CD8-positive, alpha-beta T cell (primary cell): ENCODE measurements at regions of chrX and their contacts with region 1.

Region 1: GRCh38 chrX:153934473-153935325 is at the start of gene NAA10:
- DNase-seq: peak in 8 of 9 experiments; percentile 23 to 77 (median 54)
- ATAC-seq: peak; percentile 71
- H3K4me3 ChIP-seq: peak within 1 kb of the TSS; percentile 39 to 54
- H3K4me3 Mint-ChIP-seq: peak within 1 kb of the TSS; percentile 89
- H3K27ac ChIP-seq: peak within 1 kb of the TSS in 1 of 2 experiments; percentile 43
- H3K27ac Mint-ChIP-seq: peak within 1 kb of the TSS; percentile 86
- H3K4me1 ChIP-seq: peaks cover 11% of the 10 kb centered on the region
- H3K4me1 Mint-ChIP-seq: peaks cover 22% of the 10 kb centered on the region
- H3K27me3 ChIP-seq: no peaks in the 10 kb centered on the region
- H3K27me3 Mint-ChIP-seq: no peaks in the 10 kb centered on the region
- CTCF ChIP-seq: no peak
- total RNA-seq, gene NAA10: 34.4 to 35.3 TPM

Region 2: GRCh38 chrX:153763989-153764755 is 170.5 kb before region 1 on chrX and contains the start of gene PLXNB3:
- CTCF ChIA-PET with region 1: interaction called, 11 read pairs
- POLR2A ChIA-PET with region 1: no interaction called
- intact Hi-C with region 1: no loop called
- DNase-seq: peak; percentile 45 to 89 (median 70)
- ATAC-seq: peak; percentile 88
- H3K4me3 ChIP-seq: no peak within 1 kb of the TSS
- H3K4me3 Mint-ChIP-seq: no peak within 1 kb of the TSS
- H3K27ac ChIP-seq: no peak within 1 kb of the TSS
- H3K27ac Mint-ChIP-seq: no peak within 1 kb of the TSS
- H3K4me1 ChIP-seq: peaks cover 10% of the 10 kb centered on the region
- H3K4me1 Mint-ChIP-seq: peaks cover 10% of the 10 kb centered on the region
- H3K27me3 ChIP-seq: no peaks in the 10 kb centered on the region
- H3K27me3 Mint-ChIP-seq: no peaks in the 10 kb centered on the region
- CTCF ChIP-seq: peak; percentile 52
- total RNA-seq, gene PLXNB3: 0.35 to 0.50 TPM

Region 3: GRCh38 chrX:153875391-153876111 is 59.1 kb before region 1 on chrX:
- CTCF ChIA-PET with region 1: no interaction called
- POLR2A ChIA-PET with region 1: no interaction called
- intact Hi-C with region 1: no loop called
- DNase-seq: peak; percentile 43 to 83 (median 70)
- ATAC-seq: peak; percentile 93
- H3K4me3 ChIP-seq: no peak overlapping the region
- H3K4me3 Mint-ChIP-seq: no peak overlapping the region
- H3K27ac ChIP-seq: no peak overlapping the region
- H3K27ac Mint-ChIP-seq: no peak overlapping the region
- H3K4me1 ChIP-seq: no peaks in the 10 kb centered on the region
- H3K4me1 Mint-ChIP-seq: peaks cover 11% of the 10 kb centered on the region
- H3K27me3 ChIP-seq: no peaks in the 10 kb centered on the region
- H3K27me3 Mint-ChIP-seq: peaks cover 14% of the 10 kb centered on the region
- CTCF ChIP-seq: no peak

Region 4: DNA sequence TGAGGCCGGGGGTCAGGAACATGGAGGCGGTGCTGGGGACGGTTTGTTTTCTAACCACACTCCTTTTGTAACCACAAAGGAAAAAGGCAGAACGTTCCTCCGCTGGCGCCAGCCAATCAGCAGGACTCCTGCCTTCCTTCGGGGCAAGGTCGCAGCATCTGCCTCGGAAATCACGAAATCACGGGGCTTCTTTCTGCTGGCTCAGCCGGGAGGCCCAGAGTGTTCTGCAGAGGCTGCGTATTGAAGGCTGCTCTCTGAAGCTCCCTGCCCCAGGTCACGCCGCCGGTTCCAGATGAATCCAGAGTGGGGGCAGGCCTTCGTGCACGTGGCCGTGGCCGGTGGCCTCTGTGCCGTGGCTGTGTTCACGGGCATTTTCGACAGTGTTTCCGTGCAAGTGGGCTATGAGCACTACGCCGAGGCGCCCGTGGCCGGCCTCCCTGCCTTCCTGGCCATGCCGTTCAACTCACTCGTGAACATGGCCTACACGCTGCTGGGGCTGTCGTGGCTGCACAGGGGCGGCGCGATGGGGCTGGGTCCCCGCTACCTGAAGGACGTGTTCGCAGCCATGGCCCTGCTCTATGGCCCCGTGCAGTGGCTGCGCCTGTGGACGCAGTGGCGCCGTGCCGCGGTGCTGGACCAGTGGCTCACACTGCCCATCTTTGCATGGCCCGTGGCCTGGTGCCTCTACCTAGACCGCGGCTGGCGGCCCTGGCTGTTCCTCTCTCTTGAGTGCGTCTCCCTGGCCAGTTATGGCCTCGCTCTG is 47.3 kb after region 1 on chrX:
- CTCF ChIA-PET with region 1: no interaction called
- POLR2A ChIA-PET with region 1: no interaction called
- intact Hi-C with region 1: no loop called
- DNase-seq: peak in 7 of 9 experiments; percentile 46 to 78 (median 61)
- ATAC-seq: peak; percentile 29
- H3K4me3 ChIP-seq: peak overlapping the region; percentile 2 to 37
- H3K4me3 Mint-ChIP-seq: peak overlapping the region; percentile 50
- H3K27ac ChIP-seq: peak overlapping the region; percentile 33 to 83
- H3K27ac Mint-ChIP-seq: peak overlapping the region; percentile 84
- H3K4me1 ChIP-seq: peaks cover 55% of the 10 kb centered on the region
- H3K4me1 Mint-ChIP-seq: peaks cover 43% of the 10 kb centered on the region
- H3K27me3 ChIP-seq: no peaks in the 10 kb centered on the region
- H3K27me3 Mint-ChIP-seq: no peaks in the 10 kb centered on the region
- CTCF ChIP-seq: no peak